ENCODE measurements at regions of chr1 and their contacts with region 1.

Region 1: GRCh38 chr1:60978421-60979357 is 103.7 kb upstream of the NFIA start:
- DNase-seq: no peak
- H3K4me3 ChIP-seq: no peak overlapping the region
- H3K27ac ChIP-seq: no peak overlapping the region
- H3K4me1 ChIP-seq: no peaks in the 10 kb centered on the region
- H3K27me3 ChIP-seq: no peaks in the 10 kb centered on the region
- CTCF ChIP-seq: peak in 9 of 11 experiments; percentile 19 to 70 (median 46)
- POLR2A ChIP-seq: no peak

Region 2: GRCh38 chr1:60716472-60716871 is 262.2 kb before region 1 on chr1:
- intact Hi-C with region 1: no loop called
- DNase-seq: no peak
- H3K4me3 ChIP-seq: no peak overlapping the region
- H3K27ac ChIP-seq: no peak overlapping the region
- H3K4me1 ChIP-seq: no peaks in the 10 kb centered on the region
- H3K27me3 ChIP-seq: no peaks in the 10 kb centered on the region
- CTCF ChIP-seq: no peak
- POLR2A ChIP-seq: no peak

Region 3: DNA sequence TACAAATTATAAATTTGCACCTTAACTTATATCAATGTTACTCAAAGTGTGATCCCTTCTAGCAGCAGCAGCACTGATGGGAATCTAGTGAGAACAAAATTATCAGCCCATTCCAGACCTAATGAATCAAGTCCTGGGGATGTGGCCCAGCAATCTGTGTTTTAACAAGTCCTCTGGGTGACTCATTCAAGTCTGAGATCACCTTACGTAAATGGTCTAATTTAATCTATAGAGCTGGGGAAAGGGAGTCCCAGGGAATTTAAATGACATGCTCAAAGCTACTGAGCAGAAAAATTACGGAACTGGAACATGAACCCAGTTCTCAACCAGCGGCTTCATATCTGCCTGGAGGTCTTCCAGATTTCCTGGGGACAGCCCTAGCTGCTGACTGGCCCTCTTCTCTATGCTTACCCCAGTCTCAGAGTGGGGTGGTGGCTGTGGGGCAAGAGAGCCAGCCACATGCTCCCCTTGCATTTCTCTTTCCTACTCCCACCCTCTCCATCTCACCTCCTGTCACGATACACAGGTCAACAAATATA is 526.2 kb after region 1 on chr1:
- intact Hi-C with region 1: no loop called
- DNase-seq: no peak
- H3K4me3 ChIP-seq: no peak overlapping the region
- H3K27ac ChIP-seq: no peak overlapping the region
- H3K4me1 ChIP-seq: peaks cover 0 to 6% (median 0%) of the 10 kb centered on the region in 6 donors
- H3K27me3 ChIP-seq: no peaks in the 10 kb centered on the region
- CTCF ChIP-seq: no peak
- POLR2A ChIP-seq: no peak

Region 4: DNA sequence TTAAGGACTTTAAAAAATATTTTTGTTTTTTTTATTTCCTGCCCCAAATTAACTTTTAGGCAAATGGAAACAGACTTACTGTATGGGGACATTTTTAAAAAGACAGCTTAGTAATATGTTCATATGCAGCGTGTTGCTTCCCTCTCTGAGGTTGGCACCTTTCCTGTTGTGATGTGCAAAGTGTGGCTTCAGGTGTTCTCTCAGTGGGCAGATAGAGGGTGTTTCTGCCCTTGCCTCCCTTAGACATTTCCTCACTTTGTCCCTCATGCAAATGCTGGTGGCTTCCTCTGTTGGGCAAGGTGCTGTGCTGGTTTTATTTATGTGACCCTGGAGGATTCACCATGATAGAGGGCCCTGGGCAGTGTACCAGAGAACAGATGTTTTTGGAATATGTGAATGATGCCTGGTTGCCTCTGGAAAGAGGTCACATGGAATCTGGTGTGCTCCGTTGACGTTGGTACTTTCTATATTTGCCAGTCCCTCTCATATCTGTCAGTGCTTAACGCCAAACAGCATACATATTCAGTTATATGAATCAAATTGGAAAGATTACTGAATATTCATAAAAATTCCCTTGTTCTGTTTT is 887.0 kb after region 1 on chr1:
- intact Hi-C with region 1: loop called (anchors 10 kb)
- DNase-seq: no peak
- H3K4me3 ChIP-seq: no peak overlapping the region
- H3K27ac ChIP-seq: no peak overlapping the region
- H3K4me1 ChIP-seq: no peaks in the 10 kb centered on the region
- H3K27me3 ChIP-seq: no peaks in the 10 kb centered on the region
- CTCF ChIP-seq: no peak
- POLR2A ChIP-seq: no peak

Measured in spleen (tissue), 13 donors.